B cell (primary cell): ENCODE measurements at regions of chr19 and their contacts with region 1.

Region 1: DNA sequence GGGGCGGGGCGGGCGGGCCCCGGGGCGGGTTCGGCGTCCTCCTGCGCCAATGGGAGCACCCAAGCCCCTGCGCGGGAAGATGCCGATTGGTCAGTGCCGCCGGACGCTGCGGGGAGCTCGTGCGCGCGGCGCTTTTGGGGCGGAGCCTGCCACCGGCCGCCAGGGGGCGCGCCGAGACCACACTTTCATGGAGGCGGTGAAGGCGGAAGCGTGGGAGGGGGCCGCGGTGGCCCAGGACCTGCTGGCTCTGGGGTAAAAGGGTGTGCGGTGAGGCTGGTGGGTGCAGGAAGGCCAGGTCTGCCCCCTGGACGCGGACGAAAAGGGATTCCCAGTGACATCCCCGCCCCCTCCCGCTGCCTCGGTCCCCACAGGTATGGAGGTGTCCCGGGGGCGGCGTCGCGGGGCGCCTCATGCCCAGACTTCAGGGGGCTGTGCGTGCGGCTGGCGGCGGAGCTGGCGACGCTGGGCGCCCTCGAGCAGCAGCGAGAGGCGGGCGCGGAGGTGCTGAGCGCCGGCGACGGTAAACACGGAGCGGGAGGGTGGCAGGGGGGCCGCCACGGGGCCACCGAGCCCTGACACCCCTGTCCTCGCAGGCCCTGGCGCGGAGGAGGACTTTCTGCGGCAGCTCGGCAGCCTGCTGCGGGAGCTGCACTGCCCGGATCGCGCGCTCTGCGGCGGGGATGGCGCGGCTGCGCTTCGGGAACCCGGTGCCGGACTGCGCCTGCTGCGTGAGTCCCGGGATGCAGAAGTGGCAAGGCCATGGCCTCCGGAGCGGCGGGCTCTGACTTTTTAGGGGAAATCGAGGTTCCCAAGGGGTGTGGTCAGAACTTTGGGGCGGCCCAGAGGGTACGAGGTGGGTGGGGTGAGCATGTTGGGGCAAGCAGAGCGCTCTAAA is at the start of gene FAM98C:
- DNase-seq: peak; percentile 99
- ATAC-seq: peak; percentile 97
- H3K4me3 ChIP-seq: peak within 1 kb of the TSS; percentile 41 to 85 (median 75)
- H3K4me3 Mint-ChIP-seq: peak within 1 kb of the TSS; percentile 94
- H3K27ac ChIP-seq: peak within 1 kb of the TSS; percentile 61 to 79
- H3K27ac Mint-ChIP-seq: peak within 1 kb of the TSS; percentile 94
- H3K4me1 ChIP-seq: peaks cover 5 to 14% of the 10 kb centered on the region in 2 donors
- H3K4me1 Mint-ChIP-seq: peaks cover 18% of the 10 kb centered on the region
- H3K27me3 ChIP-seq: peaks cover 0 to 20% (median 7%) of the 10 kb centered on the region in 4 experiments
- H3K27me3 Mint-ChIP-seq: peaks cover 18% of the 10 kb centered on the region
- CTCF ChIP-seq: peak; percentile 99
- total RNA-seq, gene FAM98C: 44.1 and 45.3 TPM in 2 replicates

Region 2: GRCh38 chr19:38229585-38230073 is 173.6 kb before region 1 on chr19:
- CTCF ChIA-PET with region 1: interaction called, 7 read pairs
- POLR2A ChIA-PET with region 1: no interaction called
- intact Hi-C with region 1: loop called (anchors 2 kb)
- DNase-seq: peak; percentile 79
- ATAC-seq: peak; percentile 90
- H3K4me3 ChIP-seq: no peak overlapping the region
- H3K4me3 Mint-ChIP-seq: peak overlapping the region; percentile 64
- H3K27ac ChIP-seq: no peak overlapping the region
- H3K27ac Mint-ChIP-seq: peak overlapping the region; percentile 56
- H3K4me1 ChIP-seq: peaks cover 23% of the 10 kb centered on the region in 2 donors
- H3K4me1 Mint-ChIP-seq: peaks cover 22% of the 10 kb centered on the region
- H3K27me3 ChIP-seq: peaks cover 0 to 83% (median 33%) of the 10 kb centered on the region in 4 experiments
- H3K27me3 Mint-ChIP-seq: peaks cover 37% of the 10 kb centered on the region
- CTCF ChIP-seq: no peak

Region 3: DNA sequence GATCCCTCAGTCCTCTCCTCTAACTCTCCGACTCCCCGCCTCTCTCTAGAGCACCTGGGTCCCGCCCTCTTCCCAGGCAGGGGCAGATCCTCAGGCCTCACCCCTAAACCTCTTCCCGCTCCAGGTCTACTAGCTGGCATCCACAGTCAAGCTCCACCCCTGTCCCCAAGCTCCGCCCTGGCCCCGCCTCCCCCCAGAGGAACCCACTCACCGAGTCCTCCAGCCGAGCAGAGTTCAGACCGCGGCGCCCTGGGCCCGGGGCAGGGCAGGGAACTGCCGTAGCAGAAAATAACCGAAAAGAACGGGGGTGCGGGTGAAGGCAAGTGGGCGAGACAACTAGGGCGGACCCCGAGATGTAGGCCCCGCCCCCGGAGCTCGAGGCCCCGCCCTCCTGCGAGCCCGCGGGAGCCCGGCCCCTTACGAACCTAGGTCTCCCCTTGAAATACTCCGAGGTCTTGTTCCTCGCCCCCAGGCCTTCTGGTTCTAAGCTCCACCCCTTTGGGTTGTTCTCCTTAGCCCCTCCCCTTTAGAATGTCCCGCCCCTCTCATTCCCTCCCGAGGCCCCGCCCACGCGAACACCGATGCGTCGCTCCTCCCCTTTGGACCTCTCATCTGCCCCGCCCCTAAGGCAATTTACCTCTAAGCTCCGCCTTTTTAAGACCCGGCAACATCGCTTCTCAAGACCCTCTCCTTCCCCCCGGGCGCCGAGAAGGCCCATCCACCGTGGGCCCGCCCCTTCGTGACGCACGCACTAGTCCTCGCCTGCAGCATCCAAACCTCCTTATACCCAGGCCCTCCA is 15.5 kb before region 1 on chr19 and contains the start of gene GGN:
- CTCF ChIA-PET with region 1: interaction called, 20 read pairs
- POLR2A ChIA-PET with region 1: interaction called, 10 read pairs
- intact Hi-C with region 1: loop called (anchors 2 kb)
- DNase-seq: peak; percentile 84
- ATAC-seq: peak; percentile 65
- H3K4me3 ChIP-seq: peak within 1 kb of the TSS; percentile 11 to 77 (median 41)
- H3K4me3 Mint-ChIP-seq: peak within 1 kb of the TSS; percentile 97
- H3K27ac ChIP-seq: no peak within 1 kb of the TSS
- H3K27ac Mint-ChIP-seq: peak within 1 kb of the TSS; percentile 75
- H3K4me1 ChIP-seq: peaks cover 36% of the 10 kb centered on the region in 2 donors
- H3K4me1 Mint-ChIP-seq: peaks cover 31% of the 10 kb centered on the region
- H3K27me3 ChIP-seq: peaks cover 0 to 49% (median 21%) of the 10 kb centered on the region in 4 experiments
- H3K27me3 Mint-ChIP-seq: peaks cover 27% of the 10 kb centered on the region
- CTCF ChIP-seq: no peak
- total RNA-seq, gene GGN: 0.34 TPM in 2 replicates

Region 4: GRCh38 chr19:38484747-38485146 is 81.5 kb after region 1 on chr19:
- CTCF ChIA-PET with region 1: no interaction called
- POLR2A ChIA-PET with region 1: no interaction called
- intact Hi-C with region 1: no loop called
- DNase-seq: no peak
- ATAC-seq: no peak
- H3K4me3 ChIP-seq: no peak overlapping the region
- H3K4me3 Mint-ChIP-seq: no peak overlapping the region
- H3K27ac ChIP-seq: no peak overlapping the region
- H3K27ac Mint-ChIP-seq: no peak overlapping the region
- H3K4me1 ChIP-seq: no peaks in the 10 kb centered on the region
- H3K4me1 Mint-ChIP-seq: no peaks in the 10 kb centered on the region
- H3K27me3 ChIP-seq: peaks cover 0 to 3% (median under 1%) of the 10 kb centered on the region in 4 experiments
- H3K27me3 Mint-ChIP-seq: peaks cover 35% of the 10 kb centered on the region
- CTCF ChIP-seq: no peak

Region 5: DNA sequence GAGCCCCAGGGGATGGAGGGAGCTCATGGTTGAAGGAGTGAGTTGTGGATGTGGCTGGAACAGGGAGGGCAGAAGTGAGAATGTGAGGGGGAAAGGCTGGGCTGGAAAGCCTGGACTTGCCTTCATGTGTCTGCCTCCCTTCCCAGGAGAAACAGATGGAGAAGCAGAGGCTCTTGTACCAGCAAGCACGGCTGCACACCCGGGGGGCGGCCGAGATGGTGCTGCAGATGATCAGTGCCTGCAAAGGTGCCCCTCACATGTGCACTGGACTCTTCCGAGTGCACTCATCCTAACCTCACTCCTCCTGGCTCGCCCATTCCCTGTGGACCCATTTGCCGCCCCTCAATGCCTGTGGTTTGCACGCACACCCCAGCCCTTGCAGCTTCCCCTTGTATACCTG is 131.4 kb after region 1 on chr19:
- CTCF ChIA-PET with region 1: no interaction called
- POLR2A ChIA-PET with region 1: no interaction called
- intact Hi-C with region 1: no loop called
- DNase-seq: no peak
- ATAC-seq: no peak
- H3K4me3 ChIP-seq: no peak overlapping the region
- H3K4me3 Mint-ChIP-seq: no peak overlapping the region
- H3K27ac ChIP-seq: no peak overlapping the region
- H3K27ac Mint-ChIP-seq: no peak overlapping the region
- H3K4me1 ChIP-seq: peaks cover 0 to 3% of the 10 kb centered on the region in 2 donors
- H3K4me1 Mint-ChIP-seq: peaks cover 5% of the 10 kb centered on the region
- H3K27me3 ChIP-seq: peaks cover 0 to 21% (median 7%) of the 10 kb centered on the region in 4 experiments
- H3K27me3 Mint-ChIP-seq: peaks cover 28% of the 10 kb centered on the region
- CTCF ChIP-seq: no peak

Region 6: DNA sequence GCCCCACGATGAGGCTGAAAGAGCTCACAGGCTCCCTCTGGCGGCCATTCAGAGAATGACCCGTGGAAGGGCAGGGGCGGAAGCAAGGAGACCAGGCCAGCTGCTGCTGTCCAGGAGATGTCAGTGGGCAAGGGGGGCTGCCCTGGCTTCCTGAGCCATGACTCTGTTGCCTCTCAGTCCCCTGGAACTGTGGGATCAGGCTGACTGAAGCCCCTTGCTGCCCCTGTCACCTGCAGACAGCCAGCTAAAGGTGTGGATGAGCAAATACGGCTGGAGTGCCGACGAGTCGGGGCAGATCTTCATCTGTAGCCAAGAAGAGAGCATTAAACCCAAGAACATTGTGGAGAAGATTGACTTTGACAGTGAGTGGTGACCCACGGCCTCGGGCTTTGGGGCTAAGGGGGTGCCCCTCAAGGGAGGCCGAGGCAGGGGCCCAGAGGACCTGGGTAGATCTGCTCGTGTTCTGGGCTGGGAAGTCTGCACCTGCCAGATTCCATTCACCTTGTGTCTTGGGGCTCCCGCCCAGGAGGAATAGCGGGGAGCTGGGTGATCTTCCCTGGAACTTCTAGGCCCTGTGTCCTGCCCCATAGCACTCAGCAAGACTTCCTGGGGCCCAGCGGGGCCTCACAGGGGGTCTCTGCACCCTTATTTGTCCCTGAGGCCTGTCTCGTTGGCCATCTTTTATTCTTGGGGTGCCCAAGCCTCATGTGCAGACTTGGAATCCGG is 231.7 kb after region 1 on chr19:
- CTCF ChIA-PET with region 1: interaction called, 90 read pairs
- POLR2A ChIA-PET with region 1: interaction called, 5 read pairs
- intact Hi-C with region 1: no loop called
- DNase-seq: peak; percentile 80
- ATAC-seq: peak; percentile 50
- H3K4me3 ChIP-seq: no peak overlapping the region
- H3K4me3 Mint-ChIP-seq: no peak overlapping the region
- H3K27ac ChIP-seq: peak overlapping the region in 1 of 2 donors; percentile 30
- H3K27ac Mint-ChIP-seq: peak overlapping the region; percentile 83
- H3K4me1 ChIP-seq: peaks cover 18 to 23% of the 10 kb centered on the region in 2 donors
- H3K4me1 Mint-ChIP-seq: peaks cover 21% of the 10 kb centered on the region
- H3K27me3 ChIP-seq: no peaks in the 10 kb centered on the region
- H3K27me3 Mint-ChIP-seq: no peaks in the 10 kb centered on the region
- CTCF ChIP-seq: peak; percentile 97

Region 7: DNA sequence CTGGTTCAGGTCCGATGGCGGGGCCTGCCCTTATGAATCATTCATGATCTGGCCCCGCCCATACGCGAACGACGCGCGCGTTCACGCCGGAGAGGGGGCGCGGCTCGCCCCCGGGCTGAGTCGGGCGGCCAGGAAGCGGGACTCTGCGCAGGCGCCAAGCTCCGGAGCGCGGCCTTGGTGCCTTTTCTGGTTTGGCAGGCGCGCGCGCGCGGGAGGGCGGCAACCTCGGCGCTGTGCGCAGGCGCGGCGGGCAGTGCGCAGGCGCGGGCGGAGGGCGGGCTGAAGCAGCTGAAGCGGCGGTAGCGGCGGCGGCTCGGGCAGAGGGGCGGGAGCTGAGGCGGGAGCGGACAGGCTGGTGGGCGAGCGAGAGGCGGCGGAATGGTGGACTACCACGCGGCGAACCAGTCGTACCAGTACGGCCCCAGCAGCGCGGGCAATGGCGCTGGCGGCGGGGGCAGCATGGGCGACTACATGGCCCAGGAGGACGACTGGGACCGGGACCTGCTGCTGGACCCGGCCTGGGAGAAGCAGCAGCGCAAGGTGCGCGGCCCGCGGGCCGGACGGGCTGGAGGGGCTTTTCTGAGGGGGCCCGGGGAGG is 244.3 kb after region 1 on chr19 and contains the start of gene ACTN4:
- CTCF ChIA-PET with region 1: interaction called, 13 read pairs
- POLR2A ChIA-PET with region 1: no interaction called
- intact Hi-C with region 1: loop called (anchors 1 kb)
- DNase-seq: peak; percentile 100
- ATAC-seq: peak; percentile 94
- H3K4me3 ChIP-seq: peak within 1 kb of the TSS; percentile 82 to 96 (median 91)
- H3K4me3 Mint-ChIP-seq: peak within 1 kb of the TSS; percentile 90
- H3K27ac ChIP-seq: peak within 1 kb of the TSS; percentile 40 to 68
- H3K27ac Mint-ChIP-seq: peak within 1 kb of the TSS; percentile 93
- H3K4me1 ChIP-seq: peaks cover 21 to 31% of the 10 kb centered on the region in 2 donors
- H3K4me1 Mint-ChIP-seq: peaks cover 37% of the 10 kb centered on the region
- H3K27me3 ChIP-seq: no peaks in the 10 kb centered on the region
- H3K27me3 Mint-ChIP-seq: no peaks in the 10 kb centered on the region
- CTCF ChIP-seq: no peak
- total RNA-seq, gene ACTN4: 154 and 164 TPM in 2 replicates

Region 8: GRCh38 chr19:38869856-38870607 is 466.8 kb after region 1 on chr19:
- CTCF ChIA-PET with region 1: no interaction called
- POLR2A ChIA-PET with region 1: no interaction called
- intact Hi-C with region 1: loop called (anchors 2 kb)
- DNase-seq: peak; percentile 97
- ATAC-seq: peak; percentile 87
- H3K4me3 ChIP-seq: peak overlapping the region; percentile 70 to 97 (median 86)
- H3K4me3 Mint-ChIP-seq: peak overlapping the region; percentile 95
- H3K27ac ChIP-seq: peak overlapping the region; percentile 72 to 76
- H3K27ac Mint-ChIP-seq: peak overlapping the region; percentile 92
- H3K4me1 ChIP-seq: peaks cover 39 to 53% of the 10 kb centered on the region in 2 donors
- H3K4me1 Mint-ChIP-seq: peaks cover 54% of the 10 kb centered on the region
- H3K27me3 ChIP-seq: no peaks in the 10 kb centered on the region
- H3K27me3 Mint-ChIP-seq: no peaks in the 10 kb centered on the region
- CTCF ChIP-seq: peak; percentile 86

Region 9: DNA sequence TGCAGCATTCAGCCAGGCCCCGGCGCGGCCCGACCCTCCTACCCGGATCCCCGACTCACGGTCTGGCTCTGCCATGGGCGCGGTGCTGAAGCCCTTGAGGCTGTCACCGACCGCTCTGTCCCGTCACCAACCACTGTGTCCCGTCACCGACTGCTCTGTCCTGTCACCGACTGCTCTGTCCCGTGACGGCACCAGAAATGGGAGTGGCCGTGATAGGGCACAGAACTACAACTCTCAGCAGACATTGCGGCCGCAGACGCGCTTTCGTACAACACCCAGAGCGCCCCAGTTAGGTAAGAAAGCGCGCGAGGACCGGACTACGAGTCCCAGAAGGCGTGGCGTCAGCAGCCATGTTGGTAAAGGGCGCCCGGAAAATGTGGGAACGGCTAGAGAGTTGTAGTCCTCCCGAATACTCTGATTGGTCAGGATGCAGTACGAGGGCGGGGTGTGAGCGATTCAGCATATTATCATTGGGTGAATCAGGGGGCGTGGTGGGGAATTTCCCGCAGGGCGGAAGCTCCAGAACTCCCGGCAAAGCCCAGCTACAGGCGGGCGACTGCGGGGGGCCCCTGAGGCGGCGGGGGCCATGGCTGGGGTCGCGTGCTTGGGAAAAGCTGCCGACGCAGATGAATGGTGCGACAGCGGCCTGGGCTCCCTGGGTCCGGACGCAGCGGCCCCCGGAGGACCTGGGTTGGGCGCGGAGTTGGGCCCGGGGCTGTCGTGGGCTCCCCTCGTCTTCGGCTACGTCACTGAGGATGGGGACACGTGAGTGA is 496.4 kb after region 1 on chr19 and contains the starts of genes NFKBIB and SIRT2:
- CTCF ChIA-PET with region 1: interaction called, 6 read pairs
- POLR2A ChIA-PET with region 1: no interaction called
- intact Hi-C with region 1: loop called (anchors 1 kb)
- DNase-seq: peak; percentile 100
- ATAC-seq: peak; percentile 89
- H3K4me3 ChIP-seq: peak within 1 kb of the TSS; percentile 85 to 95 (median 92)
- H3K4me3 Mint-ChIP-seq: peak within 1 kb of the TSS; percentile 96
- H3K27ac ChIP-seq: peak within 1 kb of the TSS; percentile 89 to 99
- H3K27ac Mint-ChIP-seq: peak within 1 kb of the TSS; percentile 94
- H3K4me1 ChIP-seq: peaks cover 20 to 30% of the 10 kb centered on the region in 2 donors
- H3K4me1 Mint-ChIP-seq: peaks cover 38% of the 10 kb centered on the region
- H3K27me3 ChIP-seq: no peaks in the 10 kb centered on the region
- H3K27me3 Mint-ChIP-seq: no peaks in the 10 kb centered on the region
- CTCF ChIP-seq: no peak
- total RNA-seq, gene NFKBIB: 30.3 and 31.5 TPM in 2 replicates
- total RNA-seq, gene SIRT2: 41.8 and 42.4 TPM in 2 replicates